ENCODE measurements at regions of chrX and their contacts with region 1.

Region 1: GRCh38 chrX:130339408-130340222 is at the start of gene SLC25A14:
- DNase-seq: peak; percentile 85
- H3K4me3 ChIP-seq: peak within 1 kb of the TSS; percentile 72
- H3K27ac ChIP-seq: peak within 1 kb of the TSS; percentile 51
- H3K4me1 ChIP-seq: peaks cover 12% of the 10 kb centered on the region
- CTCF ChIP-seq: no peak
- total RNA-seq, gene SLC25A14: 12.6 and 12.9 TPM in 2 replicates

Region 2: GRCh38 chrX:130902783-130903613 is 563.4 kb after region 1 on chrX and contains the start of gene ENOX2:
- CTCF ChIA-PET with region 1: no interaction called
- POLR2A ChIA-PET with region 1: interaction called, 7 read pairs
- intact Hi-C with region 1: loop called (anchors 2 kb)
- DNase-seq: peak; percentile 91
- H3K4me3 ChIP-seq: peak within 1 kb of the TSS; percentile 93
- H3K27ac ChIP-seq: no peak within 1 kb of the TSS
- H3K4me1 ChIP-seq: no peaks in the 10 kb centered on the region
- CTCF ChIP-seq: no peak
- total RNA-seq, gene ENOX2: 5.0 and 5.3 TPM in 2 replicates